ENCODE measurements at regions of chrX and their contacts with region 1.

Region 1: GRCh38 chrX:151082076-151082948 is 94.1 kb upstream of the GPR50 start:
- DNase-seq: no peak
- ATAC-seq: peak; percentile 98
- H3K4me3 ChIP-seq: no peak overlapping the region
- H3K27ac ChIP-seq: no peak overlapping the region
- H3K4me1 ChIP-seq: no peaks in the 10 kb centered on the region
- H3K27me3 ChIP-seq: no peaks in the 10 kb centered on the region
- CTCF ChIP-seq: peak; percentile 86 to 94 (median 91)
- EP300 ChIP-seq: no peak
- POLR2A ChIP-seq: no peak
- RAD21 ChIP-seq: peak; percentile 80

Region 2: DNA sequence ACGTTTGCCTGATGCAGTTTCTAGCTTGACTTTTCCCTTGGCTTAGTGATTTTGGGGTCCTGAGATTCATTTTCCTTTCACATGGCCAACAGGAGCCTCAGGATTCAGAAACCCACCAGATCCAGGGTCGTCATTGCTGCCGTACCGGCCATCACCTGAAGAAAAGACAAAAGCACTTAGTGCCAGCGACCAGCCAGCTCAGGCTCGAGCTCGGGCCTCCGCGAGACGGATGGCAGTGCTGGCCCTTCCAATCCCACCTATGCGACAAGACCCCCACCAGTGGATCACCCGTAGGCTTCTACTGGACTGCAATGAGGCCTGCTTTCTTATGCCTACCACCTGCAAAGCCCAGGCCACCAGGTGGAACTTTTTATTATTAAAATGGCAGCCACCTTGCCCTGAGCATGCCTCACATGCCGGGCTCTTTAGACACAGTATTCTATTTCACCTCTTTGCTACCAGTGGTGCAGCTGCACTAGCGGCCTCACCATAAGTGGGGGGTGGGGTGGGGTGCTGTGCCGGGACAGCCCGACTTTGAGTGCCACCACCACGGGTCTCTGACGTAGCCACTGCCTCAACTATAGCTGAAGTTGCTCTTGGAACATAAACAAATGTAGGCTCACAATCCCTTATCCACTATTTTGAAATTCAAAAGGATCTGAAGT is 304.9 kb before region 1 on chrX:
- CTCF ChIA-PET with region 1: interaction called, 95 read pairs
- POLR2A ChIA-PET with region 1: no interaction called
- RAD21 ChIA-PET with region 1: interaction called, 43 read pairs
- SMC1A ChIA-PET with region 1: interaction called, 40 read pairs
- in situ Hi-C with region 1: loop called (anchors 5 kb)
- intact Hi-C with region 1: loop called (anchors 1 kb)
- DNase-seq: no peak
- ATAC-seq: no peak
- H3K4me3 ChIP-seq: no peak overlapping the region
- H3K27ac ChIP-seq: no peak overlapping the region
- H3K4me1 ChIP-seq: peaks cover 7% of the 10 kb centered on the region; the same call in 1 of the 2 replicates
- H3K27me3 ChIP-seq: no peaks in the 10 kb centered on the region
- CTCF ChIP-seq: no peak
- EP300 ChIP-seq: no peak
- POLR2A ChIP-seq: no peak
- RAD21 ChIP-seq: no peak

Region 3: DNA sequence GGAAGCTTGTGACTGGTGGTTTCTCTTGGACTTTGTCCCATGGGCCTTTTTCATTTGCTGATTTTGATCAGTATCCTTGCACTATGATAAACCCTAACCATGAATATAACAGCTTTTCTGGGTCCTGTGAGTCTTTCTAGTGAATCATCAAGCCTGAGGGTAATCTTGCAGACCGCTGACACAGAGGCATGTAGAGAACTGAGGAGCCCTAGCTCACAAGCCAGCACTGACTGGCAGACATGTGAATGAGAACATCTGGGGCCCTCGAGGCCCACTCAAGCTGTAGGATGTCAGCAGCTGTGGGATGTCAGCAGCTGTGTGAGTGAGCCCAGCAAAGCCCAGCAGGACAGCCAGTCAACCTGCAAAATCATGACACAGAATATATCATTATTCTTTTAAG is 62.5 kb before region 1 on chrX:
- CTCF ChIA-PET with region 1: no interaction called
- POLR2A ChIA-PET with region 1: no interaction called
- RAD21 ChIA-PET with region 1: no interaction called
- SMC1A ChIA-PET with region 1: no interaction called
- in situ Hi-C with region 1: no loop called
- intact Hi-C with region 1: no loop called
- DNase-seq: no peak
- ATAC-seq: no peak
- H3K4me3 ChIP-seq: no peak overlapping the region
- H3K27ac ChIP-seq: no peak overlapping the region
- H3K4me1 ChIP-seq: no peaks in the 10 kb centered on the region
- H3K27me3 ChIP-seq: no peaks in the 10 kb centered on the region
- CTCF ChIP-seq: no peak
- EP300 ChIP-seq: no peak
- POLR2A ChIP-seq: no peak
- RAD21 ChIP-seq: no peak

Measured in GM12878 (cell line).